Mucosa of descending colon (tissue), 3 donors: ENCODE measurements at regions of chr11 and their contacts with region 1.

Region 1: DNA sequence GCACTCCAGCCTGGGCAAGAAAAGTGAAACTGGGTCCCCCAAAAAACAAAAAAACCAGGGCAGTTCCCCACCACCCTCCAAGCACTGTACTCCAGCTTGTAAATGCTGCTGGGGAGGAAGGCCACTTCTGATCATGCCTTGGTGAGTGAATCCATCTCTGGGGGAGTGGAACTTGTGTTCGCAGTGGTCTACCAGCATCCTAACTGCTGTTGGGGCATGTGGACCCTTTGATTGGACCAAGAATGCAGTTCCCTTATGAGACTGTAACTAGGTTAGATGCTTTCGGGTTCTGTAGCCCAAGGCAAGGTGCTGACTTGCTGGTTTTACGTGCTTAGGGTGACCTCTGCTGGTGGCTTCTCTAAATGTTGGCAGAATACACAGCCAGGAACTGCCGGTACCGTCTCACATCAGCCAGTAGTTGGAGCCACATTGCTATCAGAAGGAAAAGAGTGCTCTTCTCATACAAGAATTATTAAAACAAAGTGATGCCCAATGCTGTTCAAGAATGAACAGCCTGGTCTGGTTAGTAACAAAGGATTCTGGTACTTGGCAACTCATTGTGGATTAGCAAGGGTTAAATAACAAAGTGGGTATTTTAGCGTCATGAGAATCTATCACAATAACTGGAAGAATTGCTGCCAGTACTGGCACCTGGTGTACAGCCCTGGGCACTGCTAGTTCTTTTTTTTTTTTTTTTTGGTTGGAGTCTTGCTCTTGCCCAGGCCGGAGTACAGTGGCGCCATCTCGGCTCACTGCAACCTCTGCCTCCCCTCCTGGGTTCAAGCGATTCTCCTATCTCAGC is 13.0 kb downstream of the EIF1AD start:
- DNase-seq: peak; percentile 66 to 99 (median 81)
- ATAC-seq: peak; percentile 100
- H3K4me3 ChIP-seq: no peak overlapping the region
- H3K4me1 ChIP-seq: peaks cover 3% of the 10 kb centered on the region
- CTCF ChIP-seq: peak; percentile 71

Region 2: DNA sequence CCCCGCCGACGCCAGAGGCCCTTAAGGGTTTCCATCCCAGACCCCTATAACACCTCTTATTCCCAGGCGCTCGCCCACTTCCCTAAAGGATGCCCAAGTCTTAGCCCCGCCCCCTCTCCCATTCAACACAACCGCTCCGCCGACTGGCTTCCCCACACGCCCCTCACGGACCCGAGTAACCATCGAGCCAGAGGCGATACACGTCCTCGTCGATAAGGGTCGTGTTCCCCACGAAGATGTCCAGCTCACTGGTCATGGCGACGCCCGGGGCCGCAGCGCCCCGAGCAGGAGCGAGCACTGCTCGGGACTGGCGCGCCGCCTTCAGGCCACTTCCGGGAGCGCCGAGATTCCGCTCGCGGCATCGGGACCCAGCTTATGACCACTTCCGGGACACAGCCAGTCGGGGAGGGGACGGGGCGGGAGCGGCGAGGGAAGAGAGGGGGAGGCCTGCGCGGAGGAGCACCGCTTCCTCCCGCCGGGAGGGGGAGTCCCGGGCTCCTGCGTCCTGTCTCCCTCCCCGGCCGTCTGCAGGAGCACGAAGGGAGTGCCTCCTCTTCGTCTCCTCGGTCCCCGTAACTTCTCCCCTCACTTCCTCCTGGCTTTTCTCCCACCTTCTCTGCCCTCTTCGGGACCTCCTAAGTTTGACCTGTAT is 100.7 kb before region 1 on chr11 and contains the start of gene FIBP:
- intact Hi-C with region 1: loop called (anchors 10 kb)
- DNase-seq: peak; percentile 98 to 99 (median 99)
- ATAC-seq: peak; percentile 82
- H3K4me3 ChIP-seq: peak within 1 kb of the TSS; percentile 38
- H3K4me1 ChIP-seq: peaks cover 33% of the 10 kb centered on the region
- CTCF ChIP-seq: peak; percentile 95
- total RNA-seq, gene FIBP: 35.8 to 52.8 (median 47.0) TPM

Region 3: GRCh38 chr11:65919146-65920033 is 69.6 kb before region 1 on chr11 and contains the start of gene DRAP1:
- intact Hi-C with region 1: no loop called
- DNase-seq: peak; percentile 99 to 100 (median 99)
- ATAC-seq: peak; percentile 91
- H3K4me3 ChIP-seq: peak within 1 kb of the TSS; percentile 94
- H3K4me1 ChIP-seq: peaks cover 36% of the 10 kb centered on the region
- CTCF ChIP-seq: no peak
- total RNA-seq, gene DRAP1: 39.9 to 74.8 (median 61.6) TPM